Right ventricle myocardium inferior (tissue), 1 donor: ENCODE measurements at regions of chr9 and their contacts with region 1.

Region 1: GRCh38 chr9:75175395-75175794 is 87.1 kb downstream of the OSTF1 start:
- DNase-seq: no peak
- ATAC-seq: no peak

Region 2: GRCh38 chr9:75130621-75131230 is 44.7 kb before region 1 on chr9:
- intact Hi-C with region 1: loop called (anchors 5 kb)
- DNase-seq: no peak
- ATAC-seq: no peak

Region 3: DNA sequence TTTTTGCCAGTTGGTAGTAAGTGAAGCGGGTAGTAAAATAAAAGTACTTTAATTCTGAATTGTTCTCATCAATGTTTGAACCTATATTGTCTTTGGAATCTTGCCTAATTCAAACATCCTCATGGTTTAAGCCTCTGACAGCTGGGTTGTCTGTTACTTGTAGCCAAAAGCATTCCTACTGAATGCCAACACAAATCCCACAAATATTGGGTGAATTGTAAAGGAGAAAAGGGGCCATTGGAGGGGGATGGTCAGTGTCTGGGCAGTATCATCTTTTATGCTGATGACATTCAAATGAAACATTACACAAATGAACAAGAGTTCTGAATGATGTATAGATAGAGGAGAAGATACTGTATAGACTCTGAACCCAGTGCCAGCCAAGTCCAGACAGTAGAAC is 222.4 kb after region 1 on chr9:
- intact Hi-C with region 1: no loop called
- DNase-seq: no peak
- ATAC-seq: no peak

Region 4: DNA sequence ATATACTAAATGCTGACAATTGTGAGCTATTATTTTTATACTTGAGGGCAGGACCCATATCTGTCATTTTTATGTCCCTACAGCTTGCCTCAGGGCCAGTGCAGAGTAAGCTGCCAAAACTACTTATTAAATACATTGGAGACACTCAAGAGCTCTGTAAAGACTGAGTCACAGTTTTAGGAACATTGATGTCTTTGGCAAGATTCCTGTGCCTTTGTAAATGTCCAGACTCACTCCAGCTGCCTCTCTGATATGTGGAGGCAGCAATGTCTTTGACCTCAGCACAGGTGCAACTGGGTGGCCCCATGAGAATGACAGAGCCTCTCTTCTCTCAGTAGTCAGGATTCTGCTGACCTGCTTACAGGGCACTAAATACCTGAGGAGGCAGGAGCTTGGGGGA is 276.1 kb after region 1 on chr9:
- intact Hi-C with region 1: no loop called
- DNase-seq: no peak
- ATAC-seq: peak; percentile 53